ENCODE measurements at regions of chr1 and their contacts with region 1.

Region 1: DNA sequence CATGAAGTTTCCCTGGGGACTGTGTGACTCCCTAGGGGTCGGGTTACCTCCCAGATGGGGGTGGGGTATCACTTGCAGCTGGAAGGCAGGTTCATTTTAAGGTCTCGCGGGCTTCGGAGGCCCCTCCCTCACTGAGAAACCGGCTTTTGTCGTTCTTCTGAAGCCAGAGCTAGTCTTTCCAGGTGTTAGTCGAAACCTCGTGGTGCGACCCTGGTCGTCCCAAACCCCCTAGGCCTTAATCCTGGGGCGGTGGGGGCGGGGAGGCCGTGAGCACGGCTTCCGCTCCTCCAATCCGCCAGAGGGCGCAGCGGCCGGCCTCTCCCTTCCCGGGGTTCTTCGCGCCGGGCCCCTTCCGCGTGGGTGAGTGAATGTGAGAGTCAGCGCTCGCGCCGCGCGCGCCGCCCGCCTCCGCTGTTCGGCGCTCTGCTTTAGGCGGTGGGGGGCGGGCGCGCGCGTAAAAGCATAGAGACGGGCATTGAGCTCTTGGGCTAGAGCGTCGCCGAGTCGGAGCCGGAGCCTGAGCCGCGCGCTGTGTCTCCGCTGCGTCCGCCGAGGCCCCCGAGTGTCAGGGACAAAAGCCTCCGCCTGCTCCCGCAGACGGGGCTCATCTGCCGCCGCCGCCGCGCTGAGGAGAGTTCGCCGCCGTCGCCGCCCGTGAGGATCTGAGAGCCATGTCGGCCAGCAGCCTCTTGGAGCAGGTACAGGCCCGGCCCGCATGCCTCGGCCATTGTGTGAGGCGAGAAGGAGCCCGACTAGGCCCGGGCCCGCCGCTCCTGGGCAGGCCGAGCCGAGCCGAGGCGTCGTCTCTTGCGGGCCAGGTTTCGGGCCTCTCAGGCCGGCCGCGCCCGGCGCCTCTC is at the start of gene YTHDF2:
- DNase-seq: peak; percentile 95 to 98 (median 97)
- H3K4me3 ChIP-seq: peak within 1 kb of the TSS; percentile 79
- H3K4me3 Mint-ChIP-seq: peak within 1 kb of the TSS; percentile 89 to 100 (median 97)
- H3K27ac ChIP-seq: peak within 1 kb of the TSS; percentile 94
- H3K27ac Mint-ChIP-seq: peak within 1 kb of the TSS; percentile 87 to 99 (median 96)
- H3K4me1 ChIP-seq: peaks cover 27% of the 10 kb centered on the region
- H3K4me1 Mint-ChIP-seq: peaks cover 33 to 46% (median 39%) of the 10 kb centered on the region in 3 donors
- H3K27me3 ChIP-seq: no peaks in the 10 kb centered on the region
- H3K27me3 Mint-ChIP-seq: peaks cover 0 to 3% of the 10 kb centered on the region in 2 donors
- total RNA-seq, gene YTHDF2: 98.3 to 105 TPM

Region 2: GRCh38 chr1:28648474-28649198 is 88.0 kb before region 1 on chr1 and contains the start of gene RNU11:
- CTCF ChIA-PET with region 1: interaction called, 40 read pairs
- POLR2A ChIA-PET with region 1: interaction called, 66 read pairs
- DNase-seq: peak; percentile 75 to 94 (median 93)
- H3K4me3 ChIP-seq: peak within 1 kb of the TSS; percentile 89
- H3K4me3 Mint-ChIP-seq: peak within 1 kb of the TSS; percentile 79 to 92 (median 90)
- H3K27ac ChIP-seq: peak within 1 kb of the TSS; percentile 99
- H3K27ac Mint-ChIP-seq: peak within 1 kb of the TSS; percentile 95 to 100 (median 99)
- H3K4me1 ChIP-seq: peaks cover 30% of the 10 kb centered on the region
- H3K4me1 Mint-ChIP-seq: peaks cover 24 to 37% (median 33%) of the 10 kb centered on the region in 3 donors
- H3K27me3 ChIP-seq: no peaks in the 10 kb centered on the region
- H3K27me3 Mint-ChIP-seq: peaks cover 0 to 6% of the 10 kb centered on the region in 2 donors
- total RNA-seq, gene RNU11: not detected

Region 3: DNA sequence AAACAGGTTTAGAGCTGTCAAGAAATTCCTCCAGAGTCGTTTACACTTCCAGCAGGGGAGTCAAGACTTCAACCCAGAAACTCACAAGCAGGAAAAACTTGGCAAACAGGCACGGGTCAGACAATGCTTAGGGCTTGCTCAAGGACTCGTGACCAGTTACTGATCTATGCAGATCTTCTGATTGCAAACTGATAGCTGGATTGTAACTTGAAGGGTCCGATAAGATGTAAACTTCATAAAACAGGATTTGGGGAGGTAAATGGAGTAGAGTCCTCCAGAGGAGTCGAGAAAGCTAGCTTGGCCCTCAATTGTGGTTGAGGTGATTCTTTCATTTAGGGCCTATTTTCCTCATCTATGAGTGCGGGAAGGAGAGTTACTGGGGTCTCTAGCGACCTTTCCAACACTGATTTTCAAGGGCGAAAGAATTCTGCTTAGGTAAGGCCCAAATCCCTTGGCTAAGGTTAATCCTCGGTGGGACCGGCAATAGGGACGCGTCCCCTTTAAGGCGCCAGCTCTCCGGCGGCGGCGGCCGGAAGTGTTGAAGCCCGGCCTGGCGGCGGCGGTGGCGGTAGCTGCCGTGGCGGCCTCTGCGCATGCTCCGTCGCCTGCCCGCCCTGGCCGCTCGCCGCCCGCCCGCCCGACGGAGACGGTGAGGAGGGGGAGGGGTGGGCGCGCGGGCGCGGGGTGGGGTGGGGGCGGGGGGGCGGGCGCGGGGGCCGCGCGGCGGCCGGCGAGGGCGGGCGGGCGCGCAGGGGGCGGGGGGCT is 68.3 kb before region 1 on chr1 and contains the start of gene GMEB1:
- CTCF ChIA-PET with region 1: interaction called, 20 read pairs
- POLR2A ChIA-PET with region 1: interaction called, 34 read pairs
- DNase-seq: peak; percentile 76 to 90 (median 82)
- H3K4me3 ChIP-seq: peak within 1 kb of the TSS; percentile 93
- H3K4me3 Mint-ChIP-seq: peak within 1 kb of the TSS; percentile 92 to 97 (median 95)
- H3K27ac ChIP-seq: peak within 1 kb of the TSS; percentile 94
- H3K27ac Mint-ChIP-seq: peak within 1 kb of the TSS; percentile 97 to 100 (median 99)
- H3K4me1 ChIP-seq: peaks cover 5% of the 10 kb centered on the region
- H3K4me1 Mint-ChIP-seq: peaks cover 17 to 30% (median 23%) of the 10 kb centered on the region in 3 donors
- H3K27me3 ChIP-seq: no peaks in the 10 kb centered on the region
- H3K27me3 Mint-ChIP-seq: peaks cover 0 to 1% of the 10 kb centered on the region in 2 donors
- total RNA-seq, gene GMEB1: 21.3 to 21.8 TPM

Region 4: GRCh38 chr1:28751315-28752060 is 14.8 kb after region 1 on chr1:
- CTCF ChIA-PET with region 1: interaction called, 16 read pairs
- POLR2A ChIA-PET with region 1: interaction called, 3 read pairs
- DNase-seq: no peak
- H3K4me3 ChIP-seq: no peak overlapping the region
- H3K4me3 Mint-ChIP-seq: peak overlapping the region in 6 of 7 donors; percentile 1 to 61 (median 12)
- H3K27ac ChIP-seq: no peak overlapping the region
- H3K27ac Mint-ChIP-seq: peak overlapping the region in 6 of 8 donors; percentile 4 to 86 (median 40)
- H3K4me1 ChIP-seq: peaks cover 96% of the 10 kb centered on the region
- H3K4me1 Mint-ChIP-seq: peaks cover 48 to 73% (median 72%) of the 10 kb centered on the region in 3 donors
- H3K27me3 ChIP-seq: no peaks in the 10 kb centered on the region
- H3K27me3 Mint-ChIP-seq: no peaks in the 10 kb centered on the region

Region 5: GRCh38 chr1:28775121-28775944 is 38.7 kb after region 1 on chr1:
- CTCF ChIA-PET with region 1: interaction called, 16 read pairs
- POLR2A ChIA-PET with region 1: interaction called, 16 read pairs
- DNase-seq: peak; percentile 62 to 79 (median 73)
- H3K4me3 ChIP-seq: peak overlapping the region; percentile 56
- H3K4me3 Mint-ChIP-seq: peak overlapping the region; percentile 80 to 95 (median 86)
- H3K27ac ChIP-seq: no peak overlapping the region
- H3K27ac Mint-ChIP-seq: peak overlapping the region; percentile 77 to 94 (median 84)
- H3K4me1 ChIP-seq: peaks cover 10% of the 10 kb centered on the region
- H3K4me1 Mint-ChIP-seq: peaks cover 7 to 14% (median 12%) of the 10 kb centered on the region in 3 donors
- H3K27me3 ChIP-seq: no peaks in the 10 kb centered on the region
- H3K27me3 Mint-ChIP-seq: no peaks in the 10 kb centered on the region

Region 6: GRCh38 chr1:28796352-28797211 is 59.9 kb after region 1 on chr1:
- CTCF ChIA-PET with region 1: no interaction called
- POLR2A ChIA-PET with region 1: no interaction called
- DNase-seq: no peak
- H3K4me3 ChIP-seq: no peak overlapping the region
- H3K4me3 Mint-ChIP-seq: no peak overlapping the region
- H3K27ac ChIP-seq: no peak overlapping the region
- H3K27ac Mint-ChIP-seq: no peak overlapping the region
- H3K4me1 ChIP-seq: no peaks in the 10 kb centered on the region
- H3K4me1 Mint-ChIP-seq: no peaks in the 10 kb centered on the region
- H3K27me3 ChIP-seq: no peaks in the 10 kb centered on the region
- H3K27me3 Mint-ChIP-seq: peaks cover 9 to 12% of the 10 kb centered on the region in 2 donors

Measured in CD8-positive, alpha-beta memory T cell (primary cell).